Heart left ventricle (tissue), 16 donors: ENCODE measurements at regions of chr17 and their contacts with region 1.

Region 1: DNA sequence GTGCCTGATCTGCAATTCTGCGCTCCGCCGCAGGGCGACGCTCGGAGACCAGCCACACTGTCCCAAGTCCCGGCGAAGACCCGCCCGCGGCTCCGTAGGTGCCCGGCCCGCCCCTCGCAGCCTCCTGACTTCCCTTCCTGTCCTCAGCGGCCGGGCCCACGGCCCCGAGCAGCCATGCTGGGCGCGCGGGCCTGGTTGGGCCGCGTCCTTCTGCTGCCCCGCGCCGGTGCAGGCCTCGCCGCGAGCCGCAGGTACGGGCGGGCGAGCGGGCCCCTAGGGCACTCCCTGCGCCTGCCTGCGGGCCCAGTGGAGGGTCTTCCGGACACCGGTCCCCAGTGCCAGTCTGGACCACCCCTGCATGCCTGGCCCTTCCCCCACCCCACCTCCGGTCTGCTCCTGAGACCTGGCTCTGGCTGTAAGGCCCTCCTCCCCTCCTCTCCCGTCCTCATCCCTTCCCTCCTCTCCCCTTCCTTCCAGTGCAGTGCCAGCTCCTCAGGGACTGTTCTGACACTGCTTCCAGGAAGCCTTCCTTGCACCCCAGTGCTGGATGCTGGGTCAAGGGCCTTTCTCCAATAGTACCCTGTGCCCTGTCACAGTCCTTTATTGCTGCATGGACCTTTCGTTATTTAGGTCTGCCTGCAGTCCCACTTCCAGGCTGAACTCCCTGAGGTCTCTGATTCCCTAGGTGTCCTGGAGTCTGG is at the start of gene SPATA20:
- DNase-seq: peak; percentile 91 to 96 (median 94)
- ATAC-seq: peak; percentile 86 to 91 (median 88)
- H3K4me3 ChIP-seq: peak within 1 kb of the TSS; percentile 34 to 87 (median 64)
- H3K27ac ChIP-seq: peak within 1 kb of the TSS in 11 of 12 donors; percentile 74 to 94 (median 85)
- H3K4me1 ChIP-seq: peaks cover 0 to 39% (median 22%) of the 10 kb centered on the region in 12 donors
- H3K27me3 ChIP-seq: peaks cover 0 to 2% (median 0%) of the 10 kb centered on the region in 9 donors
- CTCF ChIP-seq: peak; percentile 92 to 100 (median 97)
- POLR2A ChIP-seq: peak in 1 of 2 donors; percentile 89
- total RNA-seq, gene SPATA20: 21.6 to 83.0 (median 67.1) TPM

Region 2: GRCh38 chr17:50613007-50613992 is 66.1 kb after region 1 on chr17:
- intact Hi-C with region 1: loop called in 5 of 10 experiments (anchors 1 to 5 kb)
- DNase-seq: no peak
- ATAC-seq: peak in 1 of 4 donors; percentile 38
- H3K4me3 ChIP-seq: no peak overlapping the region
- H3K27ac ChIP-seq: no peak overlapping the region
- H3K4me1 ChIP-seq: peaks cover 0 to 7% (median 0%) of the 10 kb centered on the region in 12 donors
- H3K27me3 ChIP-seq: peaks cover 0 to 16% (median 0%) of the 10 kb centered on the region in 9 donors
- CTCF ChIP-seq: peak in 11 of 12 donors; percentile 16 to 60 (median 45)
- POLR2A ChIP-seq: no peak

Region 3: GRCh38 chr17:50675627-50676026 is 128.4 kb after region 1 on chr17:
- intact Hi-C with region 1: loop called in 7 of 10 experiments (anchors 5 kb)
- DNase-seq: no peak
- ATAC-seq: peak in 2 of 4 donors; percentile 34 to 50
- H3K4me3 ChIP-seq: no peak overlapping the region
- H3K27ac ChIP-seq: no peak overlapping the region
- H3K4me1 ChIP-seq: peaks cover 0 to 7% (median 0%) of the 10 kb centered on the region in 12 donors
- H3K27me3 ChIP-seq: no peaks in the 10 kb centered on the region
- CTCF ChIP-seq: no peak
- POLR2A ChIP-seq: no peak

Region 4: GRCh38 chr17:50697663-50698274 is 150.6 kb after region 1 on chr17:
- intact Hi-C with region 1: loop called in 7 of 10 experiments (anchors 5 kb)
- DNase-seq: no peak
- ATAC-seq: no peak
- H3K4me3 ChIP-seq: no peak overlapping the region
- H3K27ac ChIP-seq: no peak overlapping the region
- H3K4me1 ChIP-seq: peaks cover 0 to 35% (median 20%) of the 10 kb centered on the region in 12 donors
- H3K27me3 ChIP-seq: no peaks in the 10 kb centered on the region
- CTCF ChIP-seq: no peak
- POLR2A ChIP-seq: no peak

Region 5: GRCh38 chr17:50816771-50817751 is 269.9 kb after region 1 on chr17:
- intact Hi-C with region 1: no loop called
- DNase-seq: peak in 3 of 5 donors; percentile 39 to 49 (median 49)
- ATAC-seq: peak; percentile 42 to 79 (median 68)
- H3K4me3 ChIP-seq: peak overlapping the region in 1 of 12 donors; percentile 14
- H3K27ac ChIP-seq: no peak overlapping the region
- H3K4me1 ChIP-seq: peaks cover 0 to 8% (median 0%) of the 10 kb centered on the region in 12 donors
- H3K27me3 ChIP-seq: peaks cover 0 to 8% (median 0%) of the 10 kb centered on the region in 9 donors
- CTCF ChIP-seq: peak; percentile 69 to 87 (median 80)
- POLR2A ChIP-seq: no peak

Region 6: DNA sequence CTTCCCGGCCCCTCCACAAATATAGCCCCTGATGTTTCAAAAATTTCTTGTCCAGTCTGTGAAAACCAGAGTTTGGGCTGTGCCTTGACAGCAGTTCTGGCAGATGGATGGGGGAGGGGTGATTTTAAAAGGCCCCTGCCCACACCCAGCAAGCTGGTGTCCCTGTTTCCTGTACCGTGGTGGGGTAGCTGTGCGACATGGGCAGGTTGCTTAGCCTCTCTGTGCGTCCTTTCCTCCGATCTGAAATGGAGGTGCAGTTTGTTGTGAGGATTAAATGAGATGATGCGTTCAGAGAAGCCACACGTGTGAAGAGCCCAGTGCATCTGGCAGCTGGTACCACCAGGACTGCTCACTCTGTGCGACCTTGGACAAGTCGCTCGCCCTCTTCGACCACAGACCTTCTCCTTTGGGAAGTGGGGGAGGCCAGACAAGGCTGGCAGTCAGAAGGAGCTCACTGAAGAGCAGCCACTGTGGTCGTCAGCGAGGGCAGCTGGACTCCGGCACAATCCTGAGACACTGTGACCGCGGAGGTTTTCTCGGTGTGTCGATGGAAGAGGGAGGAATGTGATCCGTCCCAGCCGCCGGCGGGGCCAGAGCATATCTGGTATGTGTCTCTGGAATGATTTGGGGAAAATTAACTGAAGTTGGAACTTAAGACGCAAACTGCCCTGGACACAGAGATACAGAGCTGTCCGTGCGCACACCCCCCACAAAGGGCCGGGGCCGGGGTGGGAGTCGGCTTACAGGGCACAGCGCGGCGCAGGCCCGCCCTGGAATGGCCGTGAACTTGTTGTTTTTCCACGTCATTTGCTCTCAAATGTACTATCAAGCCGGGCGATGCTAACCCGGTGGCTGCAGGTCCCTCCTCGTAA is 287.5 kb after region 1 on chr17:
- intact Hi-C with region 1: loop called in 1 of 10 experiments (anchors 2 kb)
- DNase-seq: no peak
- ATAC-seq: peak in 3 of 4 donors; percentile 8 to 18 (median 14)
- H3K4me3 ChIP-seq: peak overlapping the region in 9 of 12 donors; percentile 29 to 54 (median 40)
- H3K27ac ChIP-seq: no peak overlapping the region
- H3K4me1 ChIP-seq: peaks cover 0 to 24% (median 5%) of the 10 kb centered on the region in 12 donors
- H3K27me3 ChIP-seq: peaks cover 0 to 4% (median 0%) of the 10 kb centered on the region in 9 donors
- CTCF ChIP-seq: no peak
- POLR2A ChIP-seq: no peak

Region 7: GRCh38 chr17:50956750-50957523 is 409.8 kb after region 1 on chr17:
- intact Hi-C with region 1: loop called in 5 of 10 experiments (anchors 5 to 10 kb)
- DNase-seq: peak; percentile 59 to 83 (median 62)
- ATAC-seq: peak; percentile 52 to 76 (median 72)
- H3K4me3 ChIP-seq: no peak overlapping the region
- H3K27ac ChIP-seq: peak overlapping the region in 4 of 12 donors; percentile 51 to 78 (median 70)
- H3K4me1 ChIP-seq: peaks cover 0 to 42% (median 28%) of the 10 kb centered on the region in 12 donors
- H3K27me3 ChIP-seq: no peaks in the 10 kb centered on the region
- CTCF ChIP-seq: peak; percentile 56 to 81 (median 72)
- POLR2A ChIP-seq: no peak